IMR-90 (cell line): ENCODE measurements at regions of chr2 and their contacts with region 1.

Region 1: GRCh38 chr2:9770308-9771100 is 72.8 kb upstream of the TAF1B start:
- DNase-seq: peak; percentile 71
- ATAC-seq: peak; percentile 73
- H3K4me3 ChIP-seq: no peak overlapping the region
- H3K27ac ChIP-seq: no peak overlapping the region
- H3K4me1 ChIP-seq: peaks cover 9% of the 10 kb centered on the region; the same call in 1 of the 2 replicates
- H3K27me3 ChIP-seq: peaks cover 8% of the 10 kb centered on the region; the same call in 1 of the 2 replicates
- CTCF ChIP-seq: peak; percentile 68
- POLR2A ChIP-seq: no peak
- RAD21 ChIP-seq: peak; percentile 60

Region 2: GRCh38 chr2:9656270-9656766 is 114.2 kb before region 1 on chr2:
- CTCF ChIA-PET with region 1: interaction called, 3 read pairs
- POLR2A ChIA-PET with region 1: interaction called, 14 read pairs
- dilution Hi-C with region 1: no loop called
- in situ Hi-C with region 1: no loop called
- intact Hi-C with region 1: no loop called
- DNase-seq: peak; percentile 97
- ATAC-seq: peak; percentile 87
- H3K4me3 ChIP-seq: no peak overlapping the region
- H3K27ac ChIP-seq: peak overlapping the region; percentile 67
- H3K4me1 ChIP-seq: peaks cover 20% of the 10 kb centered on the region
- H3K27me3 ChIP-seq: no peaks in the 10 kb centered on the region
- CTCF ChIP-seq: no peak
- POLR2A ChIP-seq: no peak
- RAD21 ChIP-seq: peak; percentile 47

Region 3: DNA sequence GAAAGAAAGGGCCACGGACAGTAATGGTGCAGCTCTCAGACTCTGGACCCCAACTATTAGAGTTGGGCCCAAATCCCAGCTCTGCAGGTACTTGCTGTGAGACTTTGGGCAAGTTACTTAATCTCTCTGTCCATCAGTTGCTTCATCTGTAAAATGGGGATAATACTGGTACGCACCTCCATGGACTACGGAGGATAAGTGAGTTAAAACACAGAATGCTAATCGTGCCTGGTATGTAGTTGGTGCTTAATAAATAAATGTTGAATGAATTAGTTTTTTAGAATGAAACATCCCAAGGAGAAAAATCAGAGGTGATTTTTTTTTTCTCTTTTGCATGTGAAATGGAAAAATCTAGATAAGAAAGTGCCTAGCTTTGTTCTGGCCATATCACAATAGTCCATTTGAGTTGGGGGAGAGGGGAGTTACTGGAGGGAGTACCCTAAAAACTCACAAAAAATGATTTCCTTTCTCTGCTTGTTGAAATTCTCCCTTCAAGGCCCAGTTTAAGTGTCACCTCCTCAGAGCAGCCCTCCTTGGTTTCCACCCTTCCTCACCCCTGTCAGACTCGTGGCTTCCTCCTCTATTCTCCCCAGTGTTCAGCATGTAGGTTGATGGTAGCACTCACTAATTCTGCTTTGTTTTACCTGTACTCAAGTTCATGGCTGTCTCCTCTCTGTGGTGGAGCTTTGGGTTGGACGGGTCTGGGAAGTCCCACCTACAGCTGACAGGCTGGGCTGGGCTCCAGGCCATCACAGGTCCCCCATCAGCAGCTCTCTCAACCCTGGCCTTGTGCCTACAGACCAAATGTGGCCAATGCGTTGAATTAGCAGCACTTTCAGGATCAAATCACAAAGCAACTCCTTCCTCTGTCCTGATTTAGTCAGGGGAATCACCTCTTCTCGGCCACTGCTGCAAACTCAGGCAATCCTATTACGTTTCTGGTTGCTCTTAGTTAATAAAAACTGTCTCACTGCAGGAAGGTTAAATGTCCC is 20.0 kb before region 1 on chr2:
- CTCF ChIA-PET with region 1: interaction called, 12 read pairs
- POLR2A ChIA-PET with region 1: no interaction called
- dilution Hi-C with region 1: no loop called
- in situ Hi-C with region 1: no loop called
- intact Hi-C with region 1: no loop called
- DNase-seq: no peak
- ATAC-seq: no peak
- H3K4me3 ChIP-seq: no peak overlapping the region
- H3K27ac ChIP-seq: no peak overlapping the region
- H3K4me1 ChIP-seq: peaks cover 10% of the 10 kb centered on the region
- H3K27me3 ChIP-seq: no peaks in the 10 kb centered on the region; the same call in 1 of the 2 replicates
- CTCF ChIP-seq: no peak
- POLR2A ChIP-seq: no peak
- RAD21 ChIP-seq: no peak

Region 4: DNA sequence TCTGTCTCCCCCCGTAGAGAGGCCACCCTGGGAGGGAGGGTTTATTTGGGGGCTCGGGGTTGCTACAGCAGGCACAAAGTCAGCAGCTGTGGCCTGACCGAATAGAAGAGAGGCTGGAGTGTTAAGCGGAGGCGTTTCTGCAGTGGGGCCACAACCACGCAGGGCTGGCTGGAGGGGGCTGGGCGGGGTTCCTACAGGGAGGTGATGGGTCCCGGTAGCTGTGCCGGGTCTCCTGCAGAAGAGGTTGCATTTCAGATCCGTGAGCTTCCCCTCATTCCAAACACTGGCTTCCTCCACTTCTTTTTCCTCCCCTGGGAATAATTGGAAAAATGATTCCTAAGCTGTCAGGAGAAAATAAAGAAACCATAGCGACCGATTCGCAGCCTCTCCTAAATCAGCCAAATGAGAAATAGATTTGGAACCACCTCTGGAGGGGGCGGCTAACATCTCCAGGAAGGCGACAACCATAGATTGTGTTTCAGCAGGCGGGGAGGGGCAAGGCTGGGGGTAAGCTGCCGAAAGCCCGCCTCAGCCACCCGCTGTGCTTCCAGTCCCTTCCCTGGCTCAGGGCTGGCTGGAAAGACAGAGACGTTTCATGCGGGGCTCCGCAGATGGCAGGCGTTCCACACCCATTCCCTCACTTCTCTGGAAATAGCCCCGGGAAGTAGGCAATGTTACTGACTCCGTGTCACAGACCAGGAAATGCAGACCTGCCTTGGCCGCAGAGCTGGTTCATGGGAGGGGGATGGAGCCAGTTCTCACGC is 12.8 kb before region 1 on chr2:
- CTCF ChIA-PET with region 1: interaction called, 13 read pairs
- POLR2A ChIA-PET with region 1: no interaction called
- dilution Hi-C with region 1: no loop called
- in situ Hi-C with region 1: no loop called
- intact Hi-C with region 1: no loop called
- DNase-seq: peak; percentile 27
- ATAC-seq: peak; percentile 45
- H3K4me3 ChIP-seq: no peak overlapping the region
- H3K27ac ChIP-seq: no peak overlapping the region
- H3K4me1 ChIP-seq: peaks cover 12% of the 10 kb centered on the region
- H3K27me3 ChIP-seq: peaks cover 14% of the 10 kb centered on the region
- CTCF ChIP-seq: no peak
- POLR2A ChIP-seq: no peak
- RAD21 ChIP-seq: no peak

Region 5: DNA sequence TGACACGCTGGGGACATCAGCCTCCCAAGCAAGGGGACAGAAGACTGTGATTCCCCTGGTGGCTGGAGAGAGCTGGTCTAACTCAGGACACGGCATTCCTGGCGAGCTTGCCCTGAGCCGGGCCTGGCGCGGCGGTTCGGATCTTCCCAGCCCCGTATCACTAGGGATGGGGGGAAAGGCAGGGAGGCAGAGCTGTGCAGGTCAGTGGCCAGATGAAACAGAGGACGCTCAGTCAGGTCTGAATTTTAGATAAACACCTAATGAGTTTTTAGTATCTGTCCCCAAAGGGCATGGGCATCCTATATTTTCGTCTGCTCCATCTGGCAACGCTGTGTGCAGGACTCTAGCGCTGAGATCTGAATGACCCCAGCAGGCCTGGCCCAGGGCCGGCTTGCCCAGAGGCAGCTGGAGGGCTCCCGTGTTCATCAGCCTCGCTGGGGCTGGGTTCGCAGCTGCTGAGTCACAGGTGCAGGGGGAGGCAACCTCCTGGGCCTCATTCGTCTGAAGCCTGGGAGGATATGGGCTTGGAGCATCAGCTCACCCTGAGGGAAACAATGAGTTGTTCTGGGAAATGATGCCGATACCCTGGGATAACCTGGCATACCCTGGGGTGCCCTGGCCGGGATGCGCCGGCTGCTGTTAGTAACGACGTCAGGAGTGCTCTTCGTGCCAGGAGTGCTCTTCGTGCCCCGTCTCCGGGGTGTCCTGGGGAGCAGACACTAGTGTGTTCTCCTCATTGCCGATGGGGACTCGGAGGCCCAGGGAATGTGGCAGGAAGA is 484.1 kb after region 1 on chr2:
- CTCF ChIA-PET with region 1: no interaction called
- POLR2A ChIA-PET with region 1: no interaction called
- dilution Hi-C with region 1: no loop called
- in situ Hi-C with region 1: no loop called
- intact Hi-C with region 1: no loop called
- DNase-seq: peak; percentile 30
- ATAC-seq: peak; percentile 17; the same call in 1 of the 2 replicates
- H3K4me3 ChIP-seq: no peak overlapping the region
- H3K27ac ChIP-seq: no peak overlapping the region
- H3K4me1 ChIP-seq: no peaks in the 10 kb centered on the region
- H3K27me3 ChIP-seq: peaks cover 20% of the 10 kb centered on the region
- CTCF ChIP-seq: no peak
- POLR2A ChIP-seq: no peak
- RAD21 ChIP-seq: no peak